ENCODE measurements at regions of chr6 and their contacts with region 1.

Region 1: GRCh38 chr6:151451950-151452749 is at the start of gene RMND1:
- DNase-seq: peak; percentile 92 to 99 (median 99)
- ATAC-seq: peak; percentile 98
- H3K4me3 ChIP-seq: peak within 1 kb of the TSS; percentile 90
- H3K4me3 Mint-ChIP-seq: peak within 1 kb of the TSS; percentile 90 to 98 (median 96)
- H3K27ac ChIP-seq: peak within 1 kb of the TSS; percentile 86
- H3K27ac Mint-ChIP-seq: peak within 1 kb of the TSS; percentile 83 to 98 (median 92)
- H3K4me1 ChIP-seq: peaks cover 15 to 20% of the 10 kb centered on the region in 2 donors
- H3K4me1 Mint-ChIP-seq: peaks cover 36 to 68% (median 54%) of the 10 kb centered on the region in 7 donors
- H3K27me3 ChIP-seq: no peaks in the 10 kb centered on the region
- H3K27me3 Mint-ChIP-seq: peaks cover 0 to 5% (median 0%) of the 10 kb centered on the region in 5 donors
- total RNA-seq, gene RMND1: 8.8 to 21.5 (median 18.7) TPM

Region 2: GRCh38 chr6:149746147-149746946 is 1705.8 kb before region 1 on chr6 and contains the start of gene NUP43:
- CTCF ChIA-PET with region 1: no interaction called
- POLR2A ChIA-PET with region 1: no interaction called
- intact Hi-C with region 1: loop called in 1 of 2 experiments (anchors 2 kb)
- DNase-seq: peak; percentile 75 to 91 (median 90)
- ATAC-seq: peak; percentile 80
- H3K4me3 ChIP-seq: peak within 1 kb of the TSS; percentile 77
- H3K4me3 Mint-ChIP-seq: peak within 1 kb of the TSS; percentile 93 to 99 (median 97)
- H3K27ac ChIP-seq: peak within 1 kb of the TSS; percentile 82
- H3K27ac Mint-ChIP-seq: peak within 1 kb of the TSS; percentile 86 to 97 (median 95)
- H3K4me1 ChIP-seq: peaks cover 17 to 26% of the 10 kb centered on the region in 2 donors
- H3K4me1 Mint-ChIP-seq: peaks cover 14 to 46% (median 32%) of the 10 kb centered on the region in 7 donors
- H3K27me3 ChIP-seq: no peaks in the 10 kb centered on the region
- H3K27me3 Mint-ChIP-seq: no peaks in the 10 kb centered on the region
- total RNA-seq, gene NUP43: 14.0 to 70.7 (median 60.2) TPM

Region 3: DNA sequence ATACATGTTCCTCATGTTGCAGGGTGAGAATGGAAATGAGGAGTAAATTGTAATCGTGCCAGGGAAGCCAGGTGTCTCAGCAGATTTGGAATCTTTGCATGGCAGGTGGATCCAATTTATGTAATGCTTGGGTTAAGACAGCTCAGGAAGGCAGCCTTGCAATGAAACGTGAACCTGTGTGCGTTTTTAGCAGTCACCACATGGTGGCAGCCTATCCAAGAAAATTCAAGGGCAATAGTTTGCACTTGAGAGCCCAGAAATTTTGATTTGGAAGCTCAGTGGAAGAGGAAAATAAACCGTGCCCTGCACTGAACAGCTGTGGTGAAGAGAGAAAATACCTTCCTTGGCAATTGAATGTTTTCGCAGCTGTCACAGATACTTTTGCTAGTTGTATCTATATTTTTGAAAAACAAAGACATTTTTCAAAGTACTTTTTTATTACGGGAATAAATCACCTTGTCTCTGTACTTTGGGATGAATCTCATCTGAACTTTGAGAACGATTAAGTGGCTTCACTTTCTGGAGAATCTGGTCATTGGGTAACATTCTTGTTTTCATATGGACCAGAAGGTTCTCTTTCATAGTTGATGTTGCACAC is 560.2 kb before region 1 on chr6:
- CTCF ChIA-PET with region 1: no interaction called
- POLR2A ChIA-PET with region 1: no interaction called
- intact Hi-C with region 1: loop called in 1 of 2 experiments (anchors 10 kb)
- DNase-seq: peak; percentile 8 to 58 (median 44)
- ATAC-seq: peak; percentile 76
- H3K4me3 ChIP-seq: no peak overlapping the region
- H3K4me3 Mint-ChIP-seq: no peak overlapping the region
- H3K27ac ChIP-seq: no peak overlapping the region
- H3K27ac Mint-ChIP-seq: peak overlapping the region in 1 of 9 donors; percentile 34
- H3K4me1 ChIP-seq: peaks cover 0 to 9% of the 10 kb centered on the region in 2 donors
- H3K4me1 Mint-ChIP-seq: peaks cover 4 to 30% (median 14%) of the 10 kb centered on the region in 7 donors
- H3K27me3 ChIP-seq: no peaks in the 10 kb centered on the region
- H3K27me3 Mint-ChIP-seq: no peaks in the 10 kb centered on the region

Region 4: DNA sequence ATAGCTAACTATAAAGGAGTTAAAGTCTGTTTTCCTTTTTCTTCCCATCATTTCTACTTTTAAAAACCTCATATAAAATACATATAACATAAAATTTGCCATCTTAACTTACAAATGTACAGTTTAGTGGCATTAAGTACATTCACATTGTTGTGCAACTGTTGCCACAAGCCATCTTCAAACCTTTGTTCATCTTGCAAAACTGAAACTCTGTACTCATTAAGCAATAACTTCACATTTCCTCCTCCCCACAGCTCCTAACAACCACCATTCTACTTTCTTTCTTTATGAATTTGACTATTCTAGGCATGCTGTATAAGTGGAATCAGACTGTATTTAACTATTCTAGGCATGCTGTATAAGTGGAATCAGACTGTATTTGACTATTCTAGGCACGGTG is 46.2 kb after region 1 on chr6:
- CTCF ChIA-PET with region 1: no interaction called
- POLR2A ChIA-PET with region 1: no interaction called
- intact Hi-C with region 1: no loop called
- DNase-seq: no peak
- ATAC-seq: peak; percentile 31
- H3K4me3 ChIP-seq: no peak overlapping the region
- H3K4me3 Mint-ChIP-seq: no peak overlapping the region
- H3K27ac ChIP-seq: no peak overlapping the region
- H3K27ac Mint-ChIP-seq: no peak overlapping the region
- H3K4me1 ChIP-seq: no peaks in the 10 kb centered on the region
- H3K4me1 Mint-ChIP-seq: peaks cover 10 to 18% (median 14%) of the 10 kb centered on the region in 7 donors
- H3K27me3 ChIP-seq: peaks cover 4 to 16% of the 10 kb centered on the region in 2 donors
- H3K27me3 Mint-ChIP-seq: peaks cover 35 to 52% (median 46%) of the 10 kb centered on the region in 5 donors

Region 5: GRCh38 chr6:151690768-151691562 is 238.8 kb after region 1 on chr6:
- CTCF ChIA-PET with region 1: no interaction called
- POLR2A ChIA-PET with region 1: no interaction called
- intact Hi-C with region 1: loop called in 1 of 2 experiments (anchors 5 kb)
- DNase-seq: peak in 6 of 9 donors; percentile 8 to 44 (median 28)
- ATAC-seq: peak; percentile 82
- H3K4me3 ChIP-seq: peak overlapping the region; percentile 45
- H3K4me3 Mint-ChIP-seq: peak overlapping the region; percentile 69 to 91 (median 86)
- H3K27ac ChIP-seq: peak overlapping the region; percentile 67
- H3K27ac Mint-ChIP-seq: peak overlapping the region; percentile 71 to 96 (median 86)
- H3K4me1 ChIP-seq: peaks cover 0 to 4% of the 10 kb centered on the region in 2 donors
- H3K4me1 Mint-ChIP-seq: peaks cover 0 to 34% (median 21%) of the 10 kb centered on the region in 7 donors
- H3K27me3 ChIP-seq: no peaks in the 10 kb centered on the region
- H3K27me3 Mint-ChIP-seq: peaks cover 0 to 10% (median 0%) of the 10 kb centered on the region in 5 donors

Region 6: DNA sequence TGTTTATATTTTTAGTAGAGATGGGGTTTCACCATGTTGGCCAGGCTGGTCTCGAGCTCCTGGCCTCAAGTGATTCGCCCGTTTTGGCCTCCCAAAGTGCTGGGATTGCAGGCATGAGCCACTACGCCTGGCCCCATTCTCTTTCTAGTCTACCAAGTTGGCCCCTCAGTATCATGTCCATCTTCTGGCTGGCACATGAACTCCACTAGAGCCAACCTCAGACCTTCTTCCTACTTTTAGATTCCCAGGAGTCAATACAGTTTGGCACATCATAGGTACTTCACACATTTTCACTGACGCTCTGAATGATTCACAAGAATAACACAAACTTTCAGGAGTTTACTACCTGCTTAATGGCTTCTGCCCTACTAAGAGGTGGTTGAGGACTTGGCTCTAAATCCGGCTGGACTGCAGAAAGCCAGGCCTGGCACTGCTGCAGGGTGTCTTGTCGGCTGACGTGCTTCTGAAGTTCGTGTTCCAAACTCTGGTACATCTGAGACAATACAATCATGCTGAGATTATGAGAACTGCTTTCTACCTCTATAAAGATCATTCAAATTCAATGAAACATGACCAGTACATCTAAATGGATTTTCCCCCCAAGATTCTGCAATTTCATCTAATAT is 891.7 kb after region 1 on chr6:
- CTCF ChIA-PET with region 1: no interaction called
- POLR2A ChIA-PET with region 1: no interaction called
- intact Hi-C with region 1: loop called in 1 of 2 experiments (anchors 5 kb)
- DNase-seq: no peak
- ATAC-seq: no peak
- H3K4me3 ChIP-seq: no peak overlapping the region
- H3K4me3 Mint-ChIP-seq: no peak overlapping the region
- H3K27ac ChIP-seq: no peak overlapping the region
- H3K27ac Mint-ChIP-seq: no peak overlapping the region
- H3K4me1 ChIP-seq: no peaks in the 10 kb centered on the region
- H3K4me1 Mint-ChIP-seq: peaks cover 0 to 3% (median 0%) of the 10 kb centered on the region in 7 donors
- H3K27me3 ChIP-seq: no peaks in the 10 kb centered on the region
- H3K27me3 Mint-ChIP-seq: peaks cover 0 to 6% (median 0%) of the 10 kb centered on the region in 5 donors